ENCODE measurements at regions of chr7 and their contacts with region 1.

Region 1: GRCh38 chr7:140375892-140376730 is 22.2 kb downstream of the SLC37A3 start:
- DNase-seq: no peak
- ATAC-seq: peak; percentile 38
- H3K4me3 ChIP-seq: no peak overlapping the region
- H3K27ac ChIP-seq: no peak overlapping the region
- H3K4me1 ChIP-seq: no peaks in the 10 kb centered on the region
- H3K27me3 ChIP-seq: no peaks in the 10 kb centered on the region
- CTCF ChIP-seq: no peak

Region 2: GRCh38 chr7:140153666-140154181 is 222.4 kb before region 1 on chr7:
- CTCF ChIA-PET with region 1: no interaction called
- POLR2A ChIA-PET with region 1: interaction called, 16 read pairs
- in situ Hi-C with region 1: no loop called
- intact Hi-C with region 1: no loop called
- DNase-seq: no peak
- ATAC-seq: no peak
- H3K4me3 ChIP-seq: no peak overlapping the region
- H3K27ac ChIP-seq: no peak overlapping the region
- H3K4me1 ChIP-seq: no peaks in the 10 kb centered on the region
- H3K27me3 ChIP-seq: no peaks in the 10 kb centered on the region
- CTCF ChIP-seq: no peak

Region 3: DNA sequence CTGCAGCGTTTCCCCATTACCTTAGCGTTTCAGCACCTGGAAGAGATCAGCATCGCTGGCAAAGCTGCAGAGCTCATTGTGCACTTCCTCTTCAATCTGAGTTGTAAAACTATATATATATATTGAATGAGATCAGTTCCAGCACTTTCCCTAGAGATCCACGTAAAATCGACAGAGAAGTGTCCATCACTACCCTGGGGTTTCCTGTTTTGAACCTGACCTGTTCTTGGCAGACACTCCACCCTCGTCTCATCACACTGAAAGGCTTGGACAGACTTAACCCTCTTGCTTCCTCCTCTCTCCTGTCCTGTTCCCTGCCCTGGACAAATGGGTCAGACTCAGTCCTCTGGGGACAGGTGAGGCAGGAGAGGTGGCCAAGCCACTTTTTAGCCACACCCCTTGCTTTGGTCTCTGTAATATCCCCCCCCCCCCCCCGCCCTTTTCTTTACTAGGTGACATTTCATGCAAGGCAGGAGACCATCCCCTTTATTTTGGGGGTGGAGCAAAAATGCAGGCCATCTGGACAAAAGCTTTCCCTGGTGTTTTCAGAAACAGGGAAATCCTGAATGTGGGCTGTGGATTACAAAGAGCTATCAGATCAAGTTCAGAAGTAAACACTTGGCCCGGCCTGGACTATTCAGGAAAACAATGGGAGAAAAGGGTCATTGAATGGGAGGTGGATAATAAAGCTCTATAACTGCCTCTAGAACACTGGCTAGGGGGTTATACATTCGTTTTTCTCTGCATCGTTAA is 115.6 kb before region 1 on chr7:
- CTCF ChIA-PET with region 1: no interaction called
- POLR2A ChIA-PET with region 1: no interaction called
- in situ Hi-C with region 1: no loop called
- intact Hi-C with region 1: no loop called
- DNase-seq: no peak
- ATAC-seq: no peak
- H3K4me3 ChIP-seq: no peak overlapping the region
- H3K27ac ChIP-seq: no peak overlapping the region
- H3K4me1 ChIP-seq: no peaks in the 10 kb centered on the region
- H3K27me3 ChIP-seq: no peaks in the 10 kb centered on the region
- CTCF ChIP-seq: no peak

Region 4: DNA sequence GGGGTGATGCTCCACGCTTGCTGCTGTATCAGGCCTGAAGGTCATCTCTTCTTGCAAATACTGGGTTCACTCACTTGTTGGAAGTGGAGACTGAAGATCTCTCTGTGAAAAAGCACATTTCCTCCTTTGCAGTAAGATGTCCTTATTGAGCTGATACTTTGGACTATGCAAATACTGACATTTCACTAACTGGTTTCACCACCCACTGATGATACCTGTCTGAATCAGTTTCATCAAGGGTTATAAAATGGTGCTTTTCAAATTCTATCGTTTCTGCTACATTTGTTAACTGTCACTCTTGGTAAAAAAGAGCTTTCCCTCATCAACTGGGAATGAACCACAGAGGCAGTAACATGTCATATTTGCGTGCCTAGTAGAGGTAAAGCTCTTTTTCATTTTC is 63.2 kb after region 1 on chr7:
- CTCF ChIA-PET with region 1: interaction called, 13 read pairs
- POLR2A ChIA-PET with region 1: no interaction called
- in situ Hi-C with region 1: no loop called
- intact Hi-C with region 1: no loop called
- DNase-seq: no peak
- ATAC-seq: no peak
- H3K4me3 ChIP-seq: no peak overlapping the region
- H3K27ac ChIP-seq: no peak overlapping the region
- H3K4me1 ChIP-seq: no peaks in the 10 kb centered on the region
- H3K27me3 ChIP-seq: no peaks in the 10 kb centered on the region
- CTCF ChIP-seq: no peak

Measured in Panc1 (cell line).